Activated CD4-positive, alpha-beta T cell treated with anti-CD3 and anti-CD28 coated beads, Interleukin-2, amount 10 ng/mL, durations not matched to agents 24 days and 14 days (primary cell): ENCODE measurements at regions of chr10 and their contacts with region 1.

Region 1: GRCh38 chr10:26448706-26449435 is 10.7 kb downstream of the APBB1IP start:
- DNase-seq: peak; percentile 95
- H3K4me3 Mint-ChIP-seq: peak overlapping the region; percentile 80
- H3K27ac Mint-ChIP-seq: peak overlapping the region; percentile 97
- H3K4me1 Mint-ChIP-seq: peaks cover 73% of the 10 kb centered on the region
- H3K27me3 Mint-ChIP-seq: no peaks in the 10 kb centered on the region

Region 2: DNA sequence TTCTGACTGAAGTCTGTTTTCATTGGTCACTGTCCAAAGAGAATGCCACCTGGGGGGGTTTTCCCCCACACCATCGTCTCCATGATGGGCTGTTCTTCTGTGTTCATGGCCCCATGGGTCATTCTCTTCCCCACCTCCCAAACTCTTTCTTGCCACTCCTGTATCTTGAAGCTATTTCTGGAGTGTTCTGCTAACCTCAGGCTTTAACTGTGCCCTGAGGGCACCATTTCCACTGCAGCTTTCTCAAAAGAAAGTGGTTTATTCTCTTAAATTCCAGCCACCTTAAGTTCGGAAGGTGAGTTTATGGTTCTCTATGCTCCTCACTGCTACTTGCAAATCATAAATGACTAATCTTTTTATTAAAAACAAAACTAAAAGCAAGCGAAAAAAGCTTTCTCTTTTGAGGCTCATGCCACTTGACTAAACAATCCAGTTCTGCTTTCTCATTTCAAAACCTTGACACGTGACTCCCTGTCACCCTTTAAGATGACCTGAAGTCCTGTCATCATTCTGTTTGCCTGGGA is 18.2 kb before region 1 on chr10:
- intact Hi-C with region 1: loop called (anchors 2 kb)
- DNase-seq: peak; percentile 82
- H3K4me3 Mint-ChIP-seq: peak overlapping the region; percentile 48
- H3K27ac Mint-ChIP-seq: peak overlapping the region; percentile 87
- H3K4me1 Mint-ChIP-seq: peaks cover 12% of the 10 kb centered on the region
- H3K27me3 Mint-ChIP-seq: no peaks in the 10 kb centered on the region

Region 3: GRCh38 chr10:26467639-26468038 is 18.8 kb after region 1 on chr10:
- intact Hi-C with region 1: loop called (anchors 1 kb)
- DNase-seq: no peak
- H3K4me3 Mint-ChIP-seq: peak overlapping the region; percentile 47
- H3K27ac Mint-ChIP-seq: peak overlapping the region; percentile 73
- H3K4me1 Mint-ChIP-seq: peaks cover 58% of the 10 kb centered on the region
- H3K27me3 Mint-ChIP-seq: no peaks in the 10 kb centered on the region

Region 4: DNA sequence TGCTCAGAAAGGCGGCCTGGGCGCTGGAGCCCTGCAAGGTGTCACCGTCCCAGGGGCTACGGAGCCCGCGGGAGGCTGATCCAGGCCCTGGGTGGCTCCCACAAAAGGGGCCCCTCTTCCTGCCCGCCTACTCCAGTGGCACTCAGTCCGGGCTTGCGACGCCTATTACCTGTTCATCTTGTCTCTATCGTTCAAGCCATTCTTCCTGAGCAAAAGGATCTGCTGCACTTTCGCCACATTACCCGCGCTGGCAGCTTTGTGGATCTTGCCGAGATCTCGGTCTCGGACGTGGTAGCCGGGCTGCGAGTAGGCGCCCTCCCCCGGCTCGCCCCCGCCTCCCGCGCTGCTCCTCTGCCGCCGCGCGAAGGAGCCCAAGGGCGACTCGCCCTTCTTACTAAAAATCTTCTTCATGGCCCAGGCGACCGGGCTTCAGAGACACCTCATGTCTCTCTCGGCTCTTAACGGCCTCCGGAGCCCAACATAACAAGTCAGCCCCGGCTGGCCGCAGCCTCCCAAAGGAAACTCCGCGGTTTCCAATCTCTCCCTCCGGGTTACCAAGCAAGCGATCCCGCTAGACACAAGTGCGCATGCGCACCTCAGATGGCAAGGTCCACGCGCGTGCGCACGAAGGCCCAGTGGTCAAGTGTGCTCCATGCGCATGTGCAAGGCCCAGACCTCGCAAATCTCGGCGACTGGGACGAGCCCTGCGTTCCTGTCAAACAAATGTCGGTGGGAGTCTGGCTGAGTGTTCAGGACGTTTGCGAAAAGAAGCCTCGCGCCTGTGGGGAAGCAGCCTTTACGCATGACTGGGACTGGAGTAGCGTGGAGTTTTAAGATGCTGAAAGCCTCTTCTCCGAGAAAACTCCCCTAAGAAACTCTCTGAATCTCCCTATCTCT is 651.3 kb after region 1 on chr10 and contains the start of gene ANKRD26:
- intact Hi-C with region 1: loop called (anchors 5 kb)
- DNase-seq: peak; percentile 99
- H3K4me3 Mint-ChIP-seq: peak within 1 kb of the TSS; percentile 85
- H3K27ac Mint-ChIP-seq: peak within 1 kb of the TSS; percentile 94
- H3K4me1 Mint-ChIP-seq: peaks cover 41% of the 10 kb centered on the region
- H3K27me3 Mint-ChIP-seq: peaks cover 2% of the 10 kb centered on the region
- total RNA-seq, gene ANKRD26: 5.3 and 5.8 TPM in 2 replicates

Region 5: GRCh38 chr10:28334296-28334695 is 1885.4 kb after region 1 on chr10:
- intact Hi-C with region 1: loop called (anchors 10 kb)
- DNase-seq: peak; percentile 92
- H3K4me3 Mint-ChIP-seq: peak overlapping the region; percentile 91
- H3K27ac Mint-ChIP-seq: peak overlapping the region; percentile 100
- H3K4me1 Mint-ChIP-seq: peaks cover 46% of the 10 kb centered on the region
- H3K27me3 Mint-ChIP-seq: peaks cover 9% of the 10 kb centered on the region